ENCODE measurements at regions of chr7 and their contacts with region 1.

Region 1: GRCh38 chr7:38107486-38107893 is 70.6 kb upstream of the STARD3NL start:
- DNase-seq: peak; percentile 70
- H3K4me3 ChIP-seq: no peak overlapping the region
- H3K27ac ChIP-seq: no peak overlapping the region
- H3K4me1 ChIP-seq: no peaks in the 10 kb centered on the region
- H3K27me3 ChIP-seq: no peaks in the 10 kb centered on the region
- CTCF ChIP-seq: peak; percentile 53 to 82 (median 77)
- EP300 ChIP-seq: no peak
- POLR2A ChIP-seq: no peak

Region 2: DNA sequence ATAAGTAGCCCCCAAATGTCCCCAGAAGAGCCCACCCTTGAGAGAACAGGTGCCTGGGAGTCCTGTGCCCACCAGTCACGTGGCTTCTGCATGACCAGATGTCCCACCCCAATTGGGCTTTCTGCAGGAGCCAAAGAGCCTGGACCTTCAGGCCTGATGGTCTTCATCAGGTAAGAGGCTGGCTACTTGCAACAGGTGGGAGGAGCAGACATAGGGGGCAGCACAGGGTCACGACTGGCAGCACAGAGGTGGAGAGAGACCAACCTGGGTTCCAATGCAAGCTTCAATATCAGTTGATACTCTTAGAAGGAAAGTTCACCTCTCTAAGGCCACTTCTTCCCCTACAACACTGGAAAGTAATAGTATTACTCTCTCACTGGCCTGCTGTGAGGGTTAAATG is 946.8 kb before region 1 on chr7:
- in situ Hi-C with region 1: no loop called
- intact Hi-C with region 1: no loop called
- DNase-seq: no peak
- H3K4me3 ChIP-seq: no peak overlapping the region
- H3K27ac ChIP-seq: no peak overlapping the region
- H3K4me1 ChIP-seq: no peaks in the 10 kb centered on the region
- H3K27me3 ChIP-seq: no peaks in the 10 kb centered on the region
- CTCF ChIP-seq: no peak
- EP300 ChIP-seq: no peak
- POLR2A ChIP-seq: no peak

Region 3: DNA sequence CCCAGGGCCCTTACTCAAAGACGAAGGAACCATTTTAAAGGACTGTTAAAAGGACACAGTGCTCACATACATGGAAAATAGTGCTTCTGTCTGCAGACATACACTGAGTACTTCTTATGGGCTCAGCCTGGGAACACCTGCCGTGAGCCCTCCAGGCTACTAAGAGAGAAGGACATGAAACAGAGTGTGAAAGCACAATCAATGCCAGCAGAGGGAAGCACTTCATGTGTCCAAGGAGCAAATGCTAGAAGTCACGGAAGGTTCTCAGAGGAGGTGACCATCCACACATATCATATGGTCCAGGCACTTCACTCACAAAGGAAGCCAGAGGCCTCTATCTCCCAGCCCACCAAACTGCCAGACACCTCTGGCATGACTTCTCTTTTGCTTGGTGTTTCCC is 674.3 kb before region 1 on chr7:
- in situ Hi-C with region 1: no loop called
- intact Hi-C with region 1: no loop called
- DNase-seq: no peak
- H3K4me3 ChIP-seq: no peak overlapping the region
- H3K27ac ChIP-seq: no peak overlapping the region
- H3K4me1 ChIP-seq: peaks cover 0 to 9% (median 3%) of the 10 kb centered on the region in 4 donors
- H3K27me3 ChIP-seq: no peaks in the 10 kb centered on the region
- CTCF ChIP-seq: no peak
- EP300 ChIP-seq: no peak
- POLR2A ChIP-seq: no peak

Region 4: DNA sequence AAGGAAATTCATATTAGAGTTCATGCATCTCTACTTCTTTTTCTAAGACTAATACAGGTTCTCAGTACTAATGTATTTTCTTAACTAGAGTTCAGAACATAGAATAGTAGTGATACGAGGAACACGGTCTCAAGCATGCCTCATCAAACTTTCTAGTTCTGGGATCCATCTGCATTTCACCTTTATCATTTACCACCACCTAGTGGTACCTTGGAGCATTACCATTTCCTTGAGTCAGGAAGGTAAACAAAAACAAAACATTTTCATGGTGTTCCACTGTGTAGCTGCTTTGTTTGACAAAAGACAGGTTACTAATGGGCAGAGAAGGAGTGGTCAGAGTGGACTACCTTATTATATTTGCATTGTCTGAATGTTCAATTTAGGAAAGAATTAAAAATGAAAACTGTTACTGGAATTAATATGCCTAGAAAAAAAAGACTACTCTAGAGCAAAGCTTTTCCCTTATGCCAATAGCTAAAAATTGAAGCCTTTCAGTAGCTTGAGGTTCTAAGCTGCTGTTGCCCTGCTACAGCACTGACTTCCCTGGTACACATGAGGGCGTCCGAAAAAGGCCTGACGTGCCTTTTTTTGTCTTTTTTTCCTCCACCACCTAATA is 115.1 kb after region 1 on chr7:
- in situ Hi-C with region 1: loop called (anchors 5 kb)
- intact Hi-C with region 1: loop called (anchors 1 kb)
- DNase-seq: no peak
- H3K4me3 ChIP-seq: no peak overlapping the region
- H3K27ac ChIP-seq: peak overlapping the region in 1 of 4 donors; percentile 25
- H3K4me1 ChIP-seq: no peaks in the 10 kb centered on the region
- H3K27me3 ChIP-seq: no peaks in the 10 kb centered on the region
- CTCF ChIP-seq: peak; percentile 85 to 94 (median 91)
- EP300 ChIP-seq: no peak
- POLR2A ChIP-seq: no peak

Region 5: GRCh38 chr7:38335492-38336147 is 228.1 kb after region 1 on chr7:
- in situ Hi-C with region 1: loop called in 2 of 4 experiments (anchors 25 kb)
- intact Hi-C with region 1: no loop called
- DNase-seq: peak; percentile 89
- H3K4me3 ChIP-seq: peak overlapping the region in 1 of 4 donors; percentile 17
- H3K27ac ChIP-seq: peak overlapping the region; percentile 35 to 58 (median 44)
- H3K4me1 ChIP-seq: peaks cover 0 to 11% (median 0%) of the 10 kb centered on the region in 4 donors
- H3K27me3 ChIP-seq: no peaks in the 10 kb centered on the region
- CTCF ChIP-seq: peak; percentile 72 to 87 (median 80)
- EP300 ChIP-seq: no peak
- POLR2A ChIP-seq: no peak

Measured in transverse colon (tissue), 4 donors.